HEK293 (cell line): ENCODE measurements at regions of chr3 and their contacts with region 1.

Region 1: GRCh38 chr3:188954590-188955208 is 217.1 kb upstream of the TPRG1 start:
- H3K4me3 ChIP-seq: no peak overlapping the region
- H3K27ac ChIP-seq: no peak overlapping the region
- H3K4me1 ChIP-seq: no peaks in the 10 kb centered on the region
- CTCF ChIP-seq: peak; percentile 62

Region 2: DNA sequence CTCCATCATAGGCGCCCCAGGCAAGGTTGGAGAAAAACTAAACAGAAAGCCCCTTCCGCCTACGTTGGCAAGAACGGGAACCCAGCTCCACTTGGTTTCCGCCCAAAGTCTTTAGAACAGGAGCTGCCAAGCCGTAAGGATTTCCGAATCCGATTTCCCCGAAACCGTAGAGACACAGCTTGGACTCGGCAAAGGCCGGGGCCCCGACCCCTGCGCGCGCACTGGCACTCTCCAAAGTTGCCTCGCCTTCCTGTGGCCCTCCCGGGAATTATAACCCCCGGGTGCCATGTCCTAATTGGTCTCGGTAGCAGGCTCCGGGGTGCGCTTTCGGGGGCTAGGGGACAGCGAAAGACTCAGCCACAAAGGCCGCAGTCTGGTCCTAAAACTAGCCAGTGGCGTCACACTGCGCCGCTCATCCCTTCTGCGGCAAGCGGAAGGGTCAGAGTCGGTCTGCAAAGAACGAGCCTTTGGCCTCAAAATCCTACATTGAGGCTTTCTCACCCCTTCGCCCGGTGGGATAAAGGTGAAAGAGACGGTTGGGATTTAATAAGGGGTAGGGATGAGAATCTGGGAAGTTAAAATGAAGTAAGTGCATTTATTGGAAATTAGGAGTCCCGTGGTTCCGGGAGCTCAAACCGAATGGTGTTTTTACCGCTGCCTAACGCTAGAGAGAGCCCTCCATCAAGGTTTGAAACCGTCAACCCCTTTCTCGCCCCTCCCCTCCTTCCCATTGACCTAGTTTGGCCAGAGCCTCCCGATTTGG is 1216.2 kb before region 1 on chr3:
- CTCF ChIA-PET with region 1: interaction called, 205 read pairs
- POLR2A ChIA-PET with region 1: interaction called, 4 read pairs
- H3K4me3 ChIP-seq: peak overlapping the region; percentile 37
- H3K27ac ChIP-seq: peak overlapping the region; percentile 60; the same call in 1 of the 2 replicates
- H3K4me1 ChIP-seq: no peaks in the 10 kb centered on the region
- CTCF ChIP-seq: peak; percentile 53; the same call in 1 of the 2 replicates

Region 3: GRCh38 chr3:187745201-187746058 is 1209.3 kb before region 1 on chr3 and contains the start of gene BCL6:
- CTCF ChIA-PET with region 1: interaction called, 205 read pairs
- POLR2A ChIA-PET with region 1: interaction called, 12 read pairs
- H3K4me3 ChIP-seq: peak within 1 kb of the TSS; percentile 84
- H3K27ac ChIP-seq: peak within 1 kb of the TSS; percentile 97
- H3K4me1 ChIP-seq: no peaks in the 10 kb centered on the region
- CTCF ChIP-seq: no peak

Region 4: DNA sequence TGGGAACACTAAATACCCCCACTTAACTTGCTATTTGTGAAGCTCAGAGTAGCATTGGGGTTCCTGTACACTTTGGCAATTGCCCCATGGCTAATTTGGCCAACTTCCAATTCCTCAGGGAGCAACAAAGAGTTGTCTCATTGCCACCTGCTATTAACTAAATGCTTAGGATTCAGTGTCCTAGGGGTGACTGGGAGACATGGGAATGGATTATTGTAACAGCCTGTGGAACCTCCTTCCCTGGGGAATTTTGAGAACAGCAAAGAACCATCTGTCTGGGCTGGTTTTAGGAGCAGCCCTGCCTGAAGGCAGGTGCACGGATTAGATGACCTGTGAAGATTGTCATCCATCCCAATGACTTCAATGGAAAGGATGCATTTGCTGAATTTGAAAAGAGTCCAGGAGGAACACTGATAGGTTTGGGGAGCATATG is 220.3 kb before region 1 on chr3:
- CTCF ChIA-PET with region 1: no interaction called
- POLR2A ChIA-PET with region 1: no interaction called
- H3K4me3 ChIP-seq: no peak overlapping the region
- H3K27ac ChIP-seq: no peak overlapping the region
- H3K4me1 ChIP-seq: 0 out of 2 replicates have a peak, but pooled peaks cover 2% of the 10 kb centered on the region
- CTCF ChIP-seq: no peak

Region 5: GRCh38 chr3:188929137-188929536 is 25.6 kb before region 1 on chr3:
- CTCF ChIA-PET with region 1: interaction called, 13 read pairs
- POLR2A ChIA-PET with region 1: interaction called, 4 read pairs
- H3K4me3 ChIP-seq: no peak overlapping the region
- H3K27ac ChIP-seq: no peak overlapping the region
- H3K4me1 ChIP-seq: no peaks in the 10 kb centered on the region
- CTCF ChIP-seq: no peak

Region 6: DNA sequence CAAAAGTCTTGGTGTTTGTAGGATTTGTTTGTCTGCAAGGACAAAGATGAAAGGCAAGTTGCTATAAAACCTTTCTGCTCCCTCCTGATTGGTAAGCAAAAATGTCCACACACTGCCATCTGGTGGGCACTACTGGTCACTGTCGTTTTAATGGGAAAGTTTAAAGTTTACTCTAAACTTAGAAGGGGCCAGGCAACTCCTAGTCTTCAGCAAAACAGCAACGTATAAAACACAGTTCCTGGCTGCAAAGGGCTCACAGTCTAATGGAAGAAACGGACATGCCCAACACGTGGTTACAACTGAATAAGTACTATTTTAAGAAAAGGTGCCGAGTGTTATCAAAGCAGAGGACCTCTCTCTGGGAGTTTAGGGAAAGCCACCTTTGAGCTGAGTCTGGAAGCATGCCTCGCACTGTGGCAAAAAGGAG is 193.4 kb after region 1 on chr3:
- CTCF ChIA-PET with region 1: interaction called, 16 read pairs
- POLR2A ChIA-PET with region 1: no interaction called
- H3K4me3 ChIP-seq: no peak overlapping the region
- H3K27ac ChIP-seq: no peak overlapping the region
- H3K4me1 ChIP-seq: no peaks in the 10 kb centered on the region
- CTCF ChIP-seq: no peak

Region 7: GRCh38 chr3:189233225-189233858 is 278.6 kb after region 1 on chr3:
- CTCF ChIA-PET with region 1: interaction called, 13 read pairs
- POLR2A ChIA-PET with region 1: no interaction called
- H3K4me3 ChIP-seq: no peak overlapping the region
- H3K27ac ChIP-seq: no peak overlapping the region
- H3K4me1 ChIP-seq: no peaks in the 10 kb centered on the region
- CTCF ChIP-seq: peak; percentile 49; the same call in 1 of the 2 replicates

Region 8: DNA sequence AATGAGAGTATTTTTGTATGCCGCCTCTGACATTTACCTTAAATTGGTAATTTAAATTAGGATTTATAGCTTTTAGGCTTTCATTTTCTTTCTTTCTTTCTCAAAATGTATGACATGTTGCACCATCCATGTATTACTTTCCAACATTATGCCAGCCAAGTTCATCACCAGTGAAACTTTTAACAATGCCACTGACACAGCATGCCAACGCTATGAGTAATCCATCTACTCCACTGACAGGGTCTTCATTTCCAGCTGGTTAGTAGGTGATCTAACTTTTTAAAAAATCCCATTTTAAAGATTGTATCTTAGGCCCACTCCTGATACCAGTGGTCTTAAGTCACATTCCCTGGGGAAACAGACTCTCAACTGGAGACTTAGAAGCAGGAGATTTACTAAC is 1411.4 kb after region 1 on chr3:
- CTCF ChIA-PET with region 1: no interaction called
- POLR2A ChIA-PET with region 1: no interaction called
- H3K4me3 ChIP-seq: no peak overlapping the region
- H3K27ac ChIP-seq: no peak overlapping the region
- H3K4me1 ChIP-seq: no peaks in the 10 kb centered on the region
- CTCF ChIP-seq: no peak